ENCODE measurements at regions of chr17 and their contacts with region 1.

Region 1: GRCh38 chr17:42101513-42102319 is 3.4 kb upstream of the ZNF385C start:
- DNase-seq: peak; percentile 76 to 93
- ATAC-seq: peak; percentile 61 to 89; a peak in 5 of 6 replicates
- H3K4me3 ChIP-seq: no peak overlapping the region
- H3K27ac ChIP-seq: no peak overlapping the region
- H3K4me1 ChIP-seq: no peaks in the 10 kb centered on the region
- CTCF ChIP-seq: peak; percentile 75
- EP300 ChIP-seq: no peak
- POLR2A ChIP-seq: no peak
- RAD21 ChIP-seq: peak; percentile 73 to 88

Region 2: GRCh38 chr17:42072323-42073187 is 29.2 kb before region 1 on chr17:
- CTCF ChIA-PET with region 1: interaction called, 454 read pairs
- POLR2A ChIA-PET with region 1: no interaction called
- DNase-seq: peak in 1 of 2 experiments; percentile 33
- ATAC-seq: peak; percentile 56 to 67
- H3K4me3 ChIP-seq: peak overlapping the region; percentile 44
- H3K27ac ChIP-seq: peak overlapping the region; percentile 55 to 83; a peak in 5 of 6 replicates
- H3K4me1 ChIP-seq: peaks cover 4% of the 10 kb centered on the region; the same call in 2 of the 3 replicates
- CTCF ChIP-seq: no peak
- EP300 ChIP-seq: no peak
- POLR2A ChIP-seq: no peak
- RAD21 ChIP-seq: no peak

Region 3: DNA sequence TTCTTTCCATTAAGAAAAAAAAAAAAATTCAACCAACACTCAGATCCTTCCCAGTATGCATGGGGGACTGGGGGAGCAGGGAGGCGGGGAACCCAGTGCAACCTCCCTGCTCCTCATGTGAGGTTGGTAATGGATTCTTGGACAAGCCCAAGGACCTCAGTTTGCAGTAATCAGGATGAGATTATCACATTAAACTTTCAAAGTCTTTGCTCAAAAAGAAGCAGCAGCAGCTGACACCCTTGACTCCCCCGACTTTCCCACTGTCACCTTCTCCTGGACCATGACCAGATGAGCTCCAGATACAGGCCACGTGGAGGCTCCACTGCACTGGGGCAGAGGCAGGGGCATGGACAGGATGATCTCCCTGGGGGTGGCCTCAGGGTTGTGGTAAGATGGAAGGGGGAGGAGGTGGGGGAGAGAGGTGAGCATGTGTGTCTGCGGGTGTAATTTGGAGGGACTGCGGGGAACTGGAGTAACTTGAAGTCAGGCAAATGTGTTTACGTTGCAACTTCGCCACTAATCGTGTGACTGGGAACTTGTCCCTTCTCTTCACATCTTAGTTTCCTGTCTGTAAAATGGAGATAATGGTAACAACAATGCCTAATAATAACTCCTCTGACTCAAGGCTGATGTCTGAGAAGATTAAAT is 23.2 kb before region 1 on chr17:
- CTCF ChIA-PET with region 1: interaction called, 11 read pairs
- POLR2A ChIA-PET with region 1: no interaction called
- DNase-seq: no peak
- ATAC-seq: no peak
- H3K4me3 ChIP-seq: no peak overlapping the region
- H3K27ac ChIP-seq: no peak overlapping the region
- H3K4me1 ChIP-seq: peaks cover 9% of the 10 kb centered on the region; the same call in 1 of the 3 replicates
- CTCF ChIP-seq: no peak
- EP300 ChIP-seq: no peak
- POLR2A ChIP-seq: no peak
- RAD21 ChIP-seq: no peak

Region 4: DNA sequence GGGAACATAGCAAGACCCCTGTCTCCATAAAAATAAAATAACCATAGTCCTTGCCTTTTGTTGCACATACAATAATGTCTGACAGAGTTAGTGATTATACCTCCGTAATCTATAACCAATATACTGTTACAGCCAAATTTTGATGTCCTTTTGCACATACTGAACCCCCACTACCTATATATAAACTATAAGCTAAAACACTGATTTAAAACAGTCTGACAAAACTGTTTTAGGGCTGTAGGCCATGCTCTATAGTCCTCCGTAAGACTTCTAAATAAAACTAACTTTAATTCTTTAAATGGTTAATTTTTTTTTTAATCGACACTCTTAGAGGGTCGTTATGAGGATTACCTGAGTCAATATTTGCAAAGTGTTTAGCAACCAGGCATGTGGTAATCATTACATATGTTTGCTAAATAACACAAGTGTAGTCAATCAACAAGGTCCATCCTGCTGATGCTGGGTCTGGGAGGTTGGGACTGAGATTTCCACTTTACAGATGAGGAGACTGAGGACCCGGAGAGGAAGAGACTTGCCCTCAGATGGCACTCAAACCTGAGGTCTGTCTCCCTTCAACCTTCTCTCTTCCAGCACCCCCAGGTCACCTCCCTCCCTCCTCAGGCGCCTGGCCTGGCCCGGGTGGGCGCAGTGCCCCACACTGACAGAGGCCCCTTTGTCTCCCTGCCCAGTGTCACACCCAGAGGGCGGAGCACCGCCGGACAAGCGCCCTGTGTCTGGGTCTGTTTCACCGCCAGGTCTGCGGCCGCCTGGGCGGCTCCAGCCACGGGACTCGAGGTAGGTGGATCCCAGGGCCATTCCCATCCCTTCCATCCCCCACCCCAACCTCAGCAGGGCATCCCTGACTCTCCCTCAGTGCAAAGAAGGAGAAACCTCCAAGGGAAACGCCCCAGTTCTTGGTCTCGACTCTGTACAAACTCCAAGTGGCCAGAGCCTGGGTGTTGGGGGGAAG is 13.7 kb before region 1 on chr17:
- CTCF ChIA-PET with region 1: interaction called, 28 read pairs
- POLR2A ChIA-PET with region 1: no interaction called
- DNase-seq: no peak
- ATAC-seq: peak; percentile 47 to 48; a peak in 5 of 6 replicates
- H3K4me3 ChIP-seq: no peak overlapping the region
- H3K27ac ChIP-seq: no peak overlapping the region
- H3K4me1 ChIP-seq: 0 out of 3 replicates have a peak, but pooled peaks cover 3% of the 10 kb centered on the region
- CTCF ChIP-seq: no peak
- EP300 ChIP-seq: no peak
- POLR2A ChIP-seq: no peak
- RAD21 ChIP-seq: no peak

Region 5: GRCh38 chr17:42129109-42129837 is 27.6 kb after region 1 on chr17:
- CTCF ChIA-PET with region 1: no interaction called
- POLR2A ChIA-PET with region 1: no interaction called
- DNase-seq: no peak
- ATAC-seq: no peak
- H3K4me3 ChIP-seq: no peak overlapping the region
- H3K27ac ChIP-seq: no peak overlapping the region
- H3K4me1 ChIP-seq: peaks cover 11% of the 10 kb centered on the region
- CTCF ChIP-seq: no peak
- EP300 ChIP-seq: no peak
- POLR2A ChIP-seq: no peak
- RAD21 ChIP-seq: no peak